ENCODE measurements at regions of chr1 and their contacts with region 1.

Region 1: DNA sequence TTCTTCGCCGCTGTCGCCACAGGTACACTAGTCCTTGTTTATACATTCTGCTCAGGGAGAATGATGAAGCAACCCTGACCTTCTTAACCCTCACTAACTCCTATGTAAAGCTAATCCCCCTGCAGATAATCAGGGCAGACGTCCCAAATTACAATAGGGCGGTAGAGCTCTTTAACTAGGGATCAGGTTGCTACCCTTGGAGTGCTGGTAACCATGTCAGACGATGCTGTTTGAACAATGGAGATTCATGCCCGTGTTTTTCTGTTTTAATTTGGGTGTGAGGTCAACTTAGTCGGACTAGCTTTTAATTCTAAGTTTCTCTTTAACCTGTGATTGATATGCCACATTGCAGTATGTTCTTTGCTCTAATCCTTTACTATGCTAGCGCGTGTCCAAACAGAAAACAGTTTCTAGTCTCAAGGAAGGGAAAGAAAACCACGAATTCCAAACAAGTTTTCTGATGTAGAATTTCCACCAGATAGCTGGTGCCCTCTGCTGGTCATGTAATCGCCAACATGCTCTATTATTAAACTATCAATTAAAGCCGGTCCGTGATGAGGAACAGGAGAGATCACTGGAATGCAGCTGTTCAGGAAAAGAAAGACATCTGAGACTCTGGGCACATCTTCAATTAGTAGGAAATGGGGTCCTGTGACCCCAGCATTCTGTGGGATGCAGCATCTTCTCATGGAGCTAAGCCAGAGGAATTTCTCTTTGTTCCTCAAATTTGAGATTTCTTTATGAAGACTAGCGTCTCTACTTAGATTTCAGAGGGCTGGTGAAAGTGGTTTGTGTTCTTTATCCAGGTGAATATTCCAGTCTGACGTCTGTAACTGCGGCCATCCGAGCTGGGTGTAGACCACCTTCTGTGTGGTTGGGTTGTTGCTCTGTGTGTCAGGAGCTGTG is 18.3 kb upstream of the VAMP3 start:
- DNase-seq: peak; percentile 51 to 89 (median 69)
- H3K4me3 ChIP-seq: peak overlapping the region in 2 of 4 donors; percentile 10 to 45
- H3K27ac ChIP-seq: no peak overlapping the region
- H3K4me1 ChIP-seq: peaks cover 0 to 5% of the 10 kb centered on the region in 2 donors
- H3K27me3 ChIP-seq: no peaks in the 10 kb centered on the region
- CTCF ChIP-seq: peak; percentile 69 to 91 (median 82)
- POLR2A ChIP-seq: no peak

Region 2: GRCh38 chr1:7667625-7668218 is 85.0 kb before region 1 on chr1:
- intact Hi-C with region 1: loop called (anchors 2 kb)
- DNase-seq: peak; percentile 82 to 97 (median 93)
- H3K4me3 ChIP-seq: no peak overlapping the region
- H3K27ac ChIP-seq: peak overlapping the region in 1 of 5 donors; percentile 81
- H3K4me1 ChIP-seq: no peaks in the 10 kb centered on the region
- H3K27me3 ChIP-seq: no peaks in the 10 kb centered on the region
- CTCF ChIP-seq: peak; percentile 99 to 100 (median 100)
- POLR2A ChIP-seq: peak in 1 of 2 donors; percentile 13

Measured in adrenal gland (tissue), 19 donors.